H1 (cell line): ENCODE measurements at regions of chr11 and their contacts with region 1.

Region 1: GRCh38 chr11:61294717-61295595 is at the start of gene VWCE:
- DNase-seq: peak; percentile 53 to 86
- H3K4me3 ChIP-seq: peak within 1 kb of the TSS; percentile 54 to 82 (median 78)
- H3K27ac ChIP-seq: peak within 1 kb of the TSS; percentile 57
- H3K4me1 ChIP-seq: peaks cover 2 to 9% (median 8%) of the 10 kb centered on the region in 4 experiments
- H3K27me3 ChIP-seq: peaks cover 1 to 12% (median 7%) of the 10 kb centered on the region in 4 experiments; a peak in 6 of 7 replicates
- CTCF ChIP-seq: 0 out of 4 replicates have a peak, but pooled peaks of 1 of the 3 experiments have one; percentile 10
- EP300 ChIP-seq: no peak
- POLR2A ChIP-seq: peak in 1 of 2 experiments; percentile 26; a peak in 2 of 3 replicates
- RAD21 ChIP-seq: no peak; a peak in 1 of 4 replicates
- total RNA-seq, gene VWCE: 12.3 and 14.5 TPM in 2 replicates

Region 2: GRCh38 chr11:60915248-60915914 is 379.6 kb before region 1 on chr11:
- CTCF ChIA-PET with region 1: no interaction called
- POLR2A ChIA-PET with region 1: no interaction called
- DNase-seq: peak in 1 of 2 experiments; percentile 73
- H3K4me3 ChIP-seq: peak overlapping the region; percentile 63 to 82 (median 72); a peak in 7 of 8 replicates
- H3K27ac ChIP-seq: peak overlapping the region; percentile 32
- H3K4me1 ChIP-seq: peaks cover 10 to 27% (median 18%) of the 10 kb centered on the region in 4 experiments
- H3K27me3 ChIP-seq: peaks cover 0 to 2% (median 0%) of the 10 kb centered on the region in 4 experiments; a peak in 1 of 7 replicates
- CTCF ChIP-seq: peak in 2 of 3 experiments; percentile 3 to 11; a peak in 1 of 4 replicates
- EP300 ChIP-seq: no peak
- POLR2A ChIP-seq: peak in 1 of 2 experiments; percentile 46; a peak in 1 of 3 replicates
- RAD21 ChIP-seq: peak; percentile 22 to 30; a peak in 2 of 4 replicates

Region 3: DNA sequence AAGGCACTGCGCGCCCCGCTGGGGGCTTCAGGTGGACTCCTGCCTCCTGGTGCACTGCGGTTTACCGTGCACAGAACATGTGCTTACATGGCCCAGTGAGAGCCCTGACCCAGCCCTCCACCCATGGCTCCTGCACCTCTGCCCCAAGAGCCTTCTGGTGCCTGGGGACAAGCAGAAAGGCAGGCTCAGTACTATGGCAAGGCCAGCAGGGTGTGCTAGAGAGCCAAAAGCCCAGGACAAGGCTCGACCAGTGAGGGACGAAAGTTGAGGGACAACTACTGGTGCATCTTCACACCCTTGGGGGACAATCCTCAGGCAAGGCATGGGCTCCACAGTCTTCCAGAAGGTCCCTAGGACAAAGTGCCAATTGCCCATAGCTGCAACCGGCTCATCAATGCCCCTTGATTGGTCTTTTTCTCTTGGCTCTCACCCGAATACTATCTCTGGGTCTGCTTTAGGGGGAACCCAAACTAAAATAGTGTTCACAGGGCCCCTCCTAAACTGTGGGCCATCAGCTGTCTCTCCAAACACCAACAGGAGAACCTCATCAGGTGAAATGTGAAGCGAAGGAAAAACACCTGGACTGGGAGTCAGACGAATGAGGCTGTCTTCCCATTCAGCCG is 40.4 kb before region 1 on chr11:
- CTCF ChIA-PET with region 1: interaction called, 14 read pairs
- POLR2A ChIA-PET with region 1: interaction called, 4 read pairs
- DNase-seq: peak; percentile 38 to 89
- H3K4me3 ChIP-seq: no peak overlapping the region
- H3K27ac ChIP-seq: no peak overlapping the region
- H3K4me1 ChIP-seq: no peaks in the 10 kb centered on the region; a peak in 1 of 7 replicates
- H3K27me3 ChIP-seq: no peaks in the 10 kb centered on the region; a peak in 1 of 7 replicates
- CTCF ChIP-seq: peak; percentile 89 to 99 (median 99)
- EP300 ChIP-seq: no peak
- POLR2A ChIP-seq: no peak
- RAD21 ChIP-seq: peak; percentile 66 to 84

Region 4: DNA sequence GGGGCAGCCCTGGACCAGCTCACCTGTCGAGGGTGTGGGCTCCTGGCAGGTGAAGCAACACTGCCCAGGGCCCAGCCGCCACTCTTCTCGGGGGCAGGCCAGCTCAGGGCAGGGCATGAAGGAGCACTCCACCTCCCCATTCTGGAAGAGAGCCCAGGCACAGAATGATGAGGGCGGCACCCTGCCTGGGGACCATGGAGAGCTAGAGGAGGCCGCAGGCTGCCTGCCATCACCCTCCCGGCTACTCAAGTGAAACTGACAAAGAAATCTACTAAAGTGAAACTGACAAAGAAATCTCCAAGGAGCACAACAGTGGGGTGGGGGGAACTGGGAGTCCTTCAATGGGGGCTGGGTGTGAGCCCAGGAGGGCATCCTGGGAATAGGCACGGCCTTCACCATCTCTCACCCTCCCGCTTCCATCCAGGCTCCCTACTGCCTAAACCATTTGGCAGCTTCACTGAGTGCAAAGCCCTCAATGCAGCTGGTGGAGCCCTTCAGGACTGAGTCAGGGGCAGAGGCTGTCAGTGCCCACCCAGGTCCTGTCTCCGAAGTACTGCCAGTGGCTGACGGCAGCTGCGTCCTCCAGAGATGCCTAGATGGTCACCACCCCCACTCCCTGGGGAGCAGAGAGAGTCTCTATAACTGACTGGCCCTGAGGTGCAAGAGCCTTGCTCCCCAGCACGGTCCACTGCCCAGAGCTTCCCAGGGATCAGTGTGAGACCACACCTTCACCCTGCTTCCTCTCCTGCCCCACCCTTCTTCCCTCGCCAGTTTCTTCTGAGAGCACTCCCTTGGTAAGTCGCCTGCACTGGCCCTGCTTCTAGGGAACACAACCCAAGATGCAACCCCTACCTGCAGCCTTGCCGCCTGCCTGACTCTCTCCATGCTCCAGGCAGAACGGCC is 21.5 kb before region 1 on chr11:
- CTCF ChIA-PET with region 1: interaction called, 10 read pairs
- POLR2A ChIA-PET with region 1: interaction called, 9 read pairs
- DNase-seq: no peak
- H3K4me3 ChIP-seq: no peak overlapping the region
- H3K27ac ChIP-seq: no peak overlapping the region
- H3K4me1 ChIP-seq: no peaks in the 10 kb centered on the region
- H3K27me3 ChIP-seq: no peaks in the 10 kb centered on the region
- CTCF ChIP-seq: no peak
- EP300 ChIP-seq: no peak
- POLR2A ChIP-seq: no peak
- RAD21 ChIP-seq: no peak

Region 5: DNA sequence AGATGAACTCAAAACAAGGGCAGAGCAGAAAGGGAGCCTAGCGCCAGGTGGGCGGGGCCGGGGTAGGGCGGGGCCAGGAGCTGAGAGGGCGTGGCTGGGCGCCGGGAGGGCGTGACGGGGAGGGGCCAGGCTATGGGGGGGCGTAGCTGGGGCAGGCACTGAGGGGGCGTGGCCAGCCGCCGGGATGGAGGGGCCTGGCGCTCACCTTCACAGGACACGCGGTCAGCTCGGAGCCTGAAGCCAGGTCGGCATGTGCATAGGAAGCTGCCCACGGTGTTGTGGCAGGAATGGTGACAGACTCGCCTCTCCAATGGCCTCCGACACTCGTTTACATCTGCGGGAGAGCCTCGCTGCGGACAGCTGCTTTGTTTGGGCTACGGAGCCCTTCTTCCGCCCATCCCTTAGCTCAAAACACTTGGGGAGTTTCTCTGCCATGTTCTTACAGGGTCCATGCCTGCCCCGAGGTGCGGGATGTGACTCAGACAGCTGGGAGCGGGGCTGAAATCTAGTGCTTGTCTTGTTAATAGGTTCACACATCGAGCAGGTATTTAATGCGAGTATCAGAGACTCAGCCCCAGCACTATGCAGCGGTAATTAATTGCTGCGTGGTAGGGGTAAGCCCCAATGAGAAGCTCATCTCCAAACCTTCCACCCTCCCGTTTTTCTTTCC is 13.2 kb before region 1 on chr11:
- CTCF ChIA-PET with region 1: interaction called, 10 read pairs
- POLR2A ChIA-PET with region 1: interaction called, 54 read pairs
- DNase-seq: peak; percentile 62 to 96
- H3K4me3 ChIP-seq: peak overlapping the region in 3 of 4 experiments; percentile 17 to 28 (median 23); a peak in 2 of 8 replicates
- H3K27ac ChIP-seq: no peak overlapping the region
- H3K4me1 ChIP-seq: peaks cover 0 to 8% (median 5%) of the 10 kb centered on the region in 4 experiments; a peak in 4 of 7 replicates
- H3K27me3 ChIP-seq: peaks cover 0 to 5% (median under 1%) of the 10 kb centered on the region in 4 experiments; a peak in 4 of 7 replicates
- CTCF ChIP-seq: no peak
- EP300 ChIP-seq: no peak
- POLR2A ChIP-seq: peak in 1 of 2 experiments; percentile 77; a peak in 2 of 3 replicates
- RAD21 ChIP-seq: no peak

Region 6: GRCh38 chr11:61347916-61348461 is 53.0 kb after region 1 on chr11:
- CTCF ChIA-PET with region 1: no interaction called
- POLR2A ChIA-PET with region 1: interaction called, 10 read pairs
- DNase-seq: no peak
- H3K4me3 ChIP-seq: no peak overlapping the region
- H3K27ac ChIP-seq: no peak overlapping the region
- H3K4me1 ChIP-seq: no peaks in the 10 kb centered on the region
- H3K27me3 ChIP-seq: no peaks in the 10 kb centered on the region
- CTCF ChIP-seq: no peak
- EP300 ChIP-seq: no peak
- POLR2A ChIP-seq: no peak; a peak in 1 of 3 replicates
- RAD21 ChIP-seq: no peak

Region 7: DNA sequence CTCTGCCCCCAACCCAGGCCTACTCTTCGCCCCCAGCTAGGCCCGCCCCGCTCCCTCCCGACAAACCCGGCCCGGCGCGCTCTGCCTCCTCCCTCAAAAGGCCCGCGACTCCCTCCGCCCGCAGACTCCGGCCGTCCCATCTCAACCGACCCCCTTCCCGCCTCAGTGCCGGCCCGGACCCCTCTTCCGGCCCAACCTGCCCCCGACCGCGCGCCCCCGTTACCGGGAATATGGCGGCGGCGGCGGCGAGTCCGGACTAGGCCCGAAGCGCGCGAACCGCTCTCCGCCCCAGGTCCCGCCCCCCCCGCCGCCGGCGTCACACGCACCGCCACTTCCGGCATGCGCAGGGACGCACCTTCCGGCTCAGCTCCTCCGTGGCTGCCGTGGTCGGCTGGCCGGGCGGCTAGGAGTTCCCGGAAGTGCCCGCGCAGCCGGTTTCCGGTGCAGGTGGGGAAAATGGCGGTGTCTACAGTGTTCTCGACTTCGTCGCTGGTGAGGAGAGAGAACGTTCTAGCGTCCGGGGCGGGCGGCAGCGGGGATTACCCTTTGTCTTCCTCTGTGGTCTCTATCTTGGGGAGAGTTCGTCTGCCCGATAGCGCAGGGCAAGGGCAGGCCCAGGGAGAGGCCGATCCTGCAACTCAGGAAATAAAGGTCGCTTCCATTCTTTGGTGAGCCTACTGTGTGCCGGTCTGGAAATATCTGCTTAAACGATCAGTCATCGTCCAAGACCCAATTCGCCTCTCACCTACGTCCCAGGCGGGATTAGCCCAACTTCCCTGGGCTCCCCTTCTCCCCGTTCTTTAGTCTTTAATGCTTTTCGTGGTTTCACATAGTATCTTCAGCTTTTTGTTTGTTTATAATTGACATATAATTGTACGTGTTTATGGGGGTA is 135.0 kb after region 1 on chr11 and contains the starts of genes CPSF7 and SDHAF2:
- CTCF ChIA-PET with region 1: no interaction called
- POLR2A ChIA-PET with region 1: interaction called, 17 read pairs
- DNase-seq: peak; percentile 82 to 98
- H3K4me3 ChIP-seq: peak within 1 kb of the TSS; percentile 76 to 94 (median 89)
- H3K27ac ChIP-seq: peak within 1 kb of the TSS; percentile 97
- H3K4me1 ChIP-seq: no peaks in the 10 kb centered on the region; a peak in 1 of 7 replicates
- H3K27me3 ChIP-seq: no peaks in the 10 kb centered on the region
- CTCF ChIP-seq: no peak
- EP300 ChIP-seq: 0 out of 3 replicates have a peak, but pooled peaks of 1 of the 2 experiments have one; percentile 24
- POLR2A ChIP-seq: peak; percentile 78 to 91
- RAD21 ChIP-seq: no peak
- total RNA-seq, gene CPSF7: 95.9 and 96.7 TPM in 2 replicates
- total RNA-seq, gene SDHAF2: 41.0 and 44.8 TPM in 2 replicates